Adrenal gland (tissue), 19 donors: ENCODE measurements at regions of chr10 and their contacts with region 1.

Region 1: DNA sequence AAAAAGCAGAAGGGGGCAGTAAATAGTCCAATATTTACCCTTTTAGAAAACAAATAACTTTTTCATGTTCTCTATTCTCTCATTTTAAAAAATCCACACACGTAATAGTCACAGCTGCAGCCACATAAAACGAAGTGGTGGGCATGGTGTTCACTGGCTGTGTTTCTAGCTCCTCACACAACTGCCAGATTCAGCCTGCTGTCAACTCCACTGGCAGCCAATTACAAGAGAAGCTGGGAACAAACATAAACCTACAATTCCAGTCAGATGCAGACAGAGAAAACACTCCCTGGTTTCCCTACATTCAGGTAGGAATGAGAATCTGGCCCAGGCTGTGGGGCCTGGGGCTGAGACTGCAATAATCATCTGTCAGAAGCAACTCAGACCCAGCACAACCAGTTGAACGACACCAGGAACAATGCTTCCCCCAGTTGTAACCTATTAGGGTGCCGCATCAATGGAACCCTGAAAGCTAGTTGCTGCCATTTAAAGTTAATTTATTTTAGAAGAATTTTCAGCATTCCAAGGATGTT is 29.1 kb downstream of the ERCC6 start:
- DNase-seq: no peak
- H3K4me3 ChIP-seq: no peak overlapping the region
- H3K27ac ChIP-seq: no peak overlapping the region
- H3K4me1 ChIP-seq: no peaks in the 10 kb centered on the region
- H3K27me3 ChIP-seq: no peaks in the 10 kb centered on the region
- CTCF ChIP-seq: no peak
- POLR2A ChIP-seq: no peak

Region 2: GRCh38 chr10:49407552-49408137 is 102.2 kb before region 1 on chr10:
- intact Hi-C with region 1: loop called (anchors 2 to 5 kb)
- DNase-seq: peak; percentile 76 to 95 (median 86)
- H3K4me3 ChIP-seq: no peak overlapping the region
- H3K27ac ChIP-seq: no peak overlapping the region
- H3K4me1 ChIP-seq: peaks cover 0 to 9% of the 10 kb centered on the region in 2 donors
- H3K27me3 ChIP-seq: peaks cover 3% of the 10 kb centered on the region
- CTCF ChIP-seq: peak; percentile 87 to 93 (median 90)
- POLR2A ChIP-seq: no peak

Region 3: GRCh38 chr10:49571388-49571787 is 61.6 kb after region 1 on chr10:
- intact Hi-C with region 1: no loop called
- DNase-seq: no peak
- H3K4me3 ChIP-seq: no peak overlapping the region
- H3K27ac ChIP-seq: no peak overlapping the region
- H3K4me1 ChIP-seq: no peaks in the 10 kb centered on the region
- H3K27me3 ChIP-seq: no peaks in the 10 kb centered on the region
- CTCF ChIP-seq: no peak
- POLR2A ChIP-seq: no peak

Region 4: DNA sequence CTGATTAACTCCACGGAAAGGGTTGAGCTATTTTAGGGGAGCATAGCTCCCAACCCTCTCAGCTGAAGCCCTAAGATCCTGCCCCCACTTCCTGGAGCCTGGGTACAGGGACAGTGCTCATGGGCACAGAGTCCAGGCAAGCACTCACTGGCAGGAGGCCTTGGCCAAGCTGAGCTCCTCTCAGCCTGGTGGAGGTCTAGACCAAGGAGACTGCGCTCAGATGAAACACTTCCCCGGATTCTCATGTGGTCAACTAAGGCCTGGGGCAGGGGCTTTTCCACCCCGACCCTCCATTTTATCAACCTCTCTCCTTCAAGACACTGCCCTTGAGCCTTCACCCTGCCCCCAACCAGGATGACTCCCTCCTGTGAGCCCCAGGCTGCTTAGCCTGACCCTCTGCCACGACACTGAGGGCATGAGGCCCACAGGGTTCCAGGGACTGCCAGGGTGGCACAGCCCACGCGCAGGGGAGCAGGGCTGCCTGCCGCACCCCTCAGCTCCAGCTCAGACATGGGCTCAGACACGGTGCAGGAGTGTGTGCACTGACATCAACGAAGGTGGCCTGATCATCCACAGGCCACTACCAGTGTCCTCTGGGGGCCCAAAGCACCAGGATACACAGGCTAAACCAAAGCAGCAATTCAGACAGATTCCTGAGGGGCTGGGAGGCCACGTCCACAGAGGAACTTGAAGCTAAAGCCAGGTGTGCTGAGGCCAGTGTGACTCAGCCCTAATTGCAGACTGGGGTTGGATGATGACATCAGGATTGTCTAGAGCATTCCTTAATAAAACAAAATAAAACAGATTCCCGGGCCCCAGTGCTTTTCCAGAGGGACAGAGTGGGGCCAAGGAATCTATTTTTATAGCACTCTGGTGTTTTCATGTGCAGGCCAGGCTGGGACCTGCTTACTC is 122.8 kb after region 1 on chr10:
- intact Hi-C with region 1: no loop called
- DNase-seq: no peak
- H3K4me3 ChIP-seq: no peak overlapping the region
- H3K27ac ChIP-seq: no peak overlapping the region
- H3K4me1 ChIP-seq: no peaks in the 10 kb centered on the region
- H3K27me3 ChIP-seq: no peaks in the 10 kb centered on the region
- CTCF ChIP-seq: no peak
- POLR2A ChIP-seq: no peak

Region 5: DNA sequence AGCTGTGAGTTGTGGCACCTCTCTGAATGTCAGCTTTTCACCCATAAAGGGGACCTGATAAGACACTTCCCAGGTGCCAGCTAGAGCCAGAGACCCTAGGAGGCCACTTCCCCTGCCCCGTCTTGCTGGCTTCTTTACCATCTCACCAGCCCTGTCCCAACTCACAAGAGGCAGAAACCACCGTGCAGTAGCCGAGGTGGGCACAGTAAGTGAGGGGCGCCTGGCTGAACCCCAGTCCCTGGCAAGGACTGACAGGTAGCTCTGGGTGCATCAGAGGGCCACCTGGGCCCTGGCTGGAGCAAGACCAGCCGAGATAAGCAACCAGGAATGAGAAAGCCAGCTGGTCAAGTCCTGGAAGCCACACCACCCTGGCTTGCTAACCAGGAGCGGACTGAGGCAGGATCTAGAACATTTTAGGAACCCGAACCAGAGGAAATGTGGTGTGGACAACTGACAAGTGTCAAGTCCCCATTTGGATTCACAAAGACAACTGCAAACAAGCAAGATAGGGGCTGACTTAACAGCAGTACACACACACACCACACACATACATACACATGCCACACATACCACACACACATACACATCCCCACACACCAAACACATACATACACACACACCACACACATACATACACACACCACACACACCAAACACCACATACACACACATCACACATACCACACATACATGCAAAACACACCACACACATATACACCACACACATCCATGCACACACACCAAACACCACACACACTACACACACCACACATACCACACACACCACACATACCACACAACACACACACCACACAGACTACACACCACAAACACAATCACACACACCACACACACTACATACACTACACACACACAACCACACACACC is 231.5 kb after region 1 on chr10:
- intact Hi-C with region 1: no loop called
- DNase-seq: peak in 1 of 7 donors; percentile 34
- H3K4me3 ChIP-seq: no peak overlapping the region
- H3K27ac ChIP-seq: no peak overlapping the region
- H3K4me1 ChIP-seq: no peaks in the 10 kb centered on the region
- H3K27me3 ChIP-seq: no peaks in the 10 kb centered on the region
- CTCF ChIP-seq: no peak
- POLR2A ChIP-seq: no peak